Aorta (tissue), 5 donors: ENCODE measurements at regions of chr7 and their contacts with region 1.

Region 1: DNA sequence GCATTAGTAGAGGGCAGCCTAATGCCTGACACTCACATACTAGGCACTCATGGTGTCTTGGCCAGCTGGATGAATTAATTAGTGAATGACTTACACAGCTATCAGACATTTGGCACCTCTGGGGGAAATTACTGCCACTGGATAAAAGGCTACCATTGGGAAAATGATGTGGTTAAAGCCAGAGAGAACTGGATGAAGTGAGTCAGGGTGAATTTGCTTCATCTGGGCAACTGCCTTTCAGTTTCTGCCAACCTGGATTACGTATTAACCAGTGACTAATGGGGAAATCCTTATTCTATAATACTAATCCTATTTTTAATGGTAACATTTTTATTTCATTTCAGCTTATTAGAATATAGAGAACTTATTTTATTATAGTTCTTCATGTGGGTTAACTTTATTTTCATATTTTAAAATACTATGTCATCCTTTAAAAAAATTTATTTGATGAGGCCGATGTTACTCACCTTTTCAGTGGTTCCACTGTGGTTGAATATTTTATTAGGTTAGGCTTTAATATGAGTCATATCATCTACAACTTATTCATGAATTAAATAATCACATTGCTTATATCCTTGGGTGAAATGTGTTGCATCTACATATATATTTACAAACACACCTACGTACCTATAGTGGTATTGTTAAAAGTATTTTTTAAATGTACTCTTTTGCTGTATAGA is 85.6 kb upstream of the CAPZA2 start:
- DNase-seq: no peak
- ATAC-seq: peak; percentile 20
- H3K4me3 ChIP-seq: no peak overlapping the region
- H3K27ac ChIP-seq: no peak overlapping the region
- H3K4me1 ChIP-seq: peaks cover 5 to 12% of the 10 kb centered on the region in 2 donors
- H3K27me3 ChIP-seq: no peaks in the 10 kb centered on the region

Region 2: DNA sequence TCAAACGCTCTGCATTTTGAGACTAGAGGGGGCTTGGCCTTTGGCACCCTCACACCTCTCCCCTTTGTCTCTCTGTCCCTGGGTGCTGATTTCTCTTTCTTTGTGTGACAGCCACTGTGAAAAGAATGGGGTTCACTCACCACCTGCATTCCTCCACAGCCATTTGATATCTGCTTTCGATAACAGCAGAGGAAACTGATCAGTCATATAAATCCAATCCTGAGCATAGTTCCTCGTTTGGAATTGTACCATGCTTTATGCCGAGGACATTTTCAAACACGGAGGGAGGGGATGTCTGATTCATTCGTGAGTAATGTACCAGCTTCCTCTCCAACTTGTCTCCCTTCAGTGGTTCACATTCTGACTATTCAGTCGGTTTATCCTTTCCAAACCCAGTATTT is 88.9 kb before region 1 on chr7:
- intact Hi-C with region 1: loop called in 1 of 2 experiments (anchors 5 kb)
- DNase-seq: no peak
- ATAC-seq: no peak
- H3K4me3 ChIP-seq: no peak overlapping the region
- H3K27ac ChIP-seq: no peak overlapping the region
- H3K4me1 ChIP-seq: no peaks in the 10 kb centered on the region
- H3K27me3 ChIP-seq: no peaks in the 10 kb centered on the region